T-cell (primary cell): ENCODE measurements at regions of chr19 and their contacts with region 1.

Region 1: GRCh38 chr19:57872450-57872849 is 16.4 kb downstream of the ZNF814 start:
- DNase-seq: no peak
- ATAC-seq: no peak
- H3K4me3 ChIP-seq: no peak overlapping the region
- H3K4me3 Mint-ChIP-seq: no peak overlapping the region
- H3K27ac ChIP-seq: no peak overlapping the region
- H3K27ac Mint-ChIP-seq: no peak overlapping the region
- H3K4me1 ChIP-seq: no peaks in the 10 kb centered on the region
- H3K4me1 Mint-ChIP-seq: no peaks in the 10 kb centered on the region
- H3K27me3 ChIP-seq: no peaks in the 10 kb centered on the region
- H3K27me3 Mint-ChIP-seq: no peaks in the 10 kb centered on the region

Region 2: DNA sequence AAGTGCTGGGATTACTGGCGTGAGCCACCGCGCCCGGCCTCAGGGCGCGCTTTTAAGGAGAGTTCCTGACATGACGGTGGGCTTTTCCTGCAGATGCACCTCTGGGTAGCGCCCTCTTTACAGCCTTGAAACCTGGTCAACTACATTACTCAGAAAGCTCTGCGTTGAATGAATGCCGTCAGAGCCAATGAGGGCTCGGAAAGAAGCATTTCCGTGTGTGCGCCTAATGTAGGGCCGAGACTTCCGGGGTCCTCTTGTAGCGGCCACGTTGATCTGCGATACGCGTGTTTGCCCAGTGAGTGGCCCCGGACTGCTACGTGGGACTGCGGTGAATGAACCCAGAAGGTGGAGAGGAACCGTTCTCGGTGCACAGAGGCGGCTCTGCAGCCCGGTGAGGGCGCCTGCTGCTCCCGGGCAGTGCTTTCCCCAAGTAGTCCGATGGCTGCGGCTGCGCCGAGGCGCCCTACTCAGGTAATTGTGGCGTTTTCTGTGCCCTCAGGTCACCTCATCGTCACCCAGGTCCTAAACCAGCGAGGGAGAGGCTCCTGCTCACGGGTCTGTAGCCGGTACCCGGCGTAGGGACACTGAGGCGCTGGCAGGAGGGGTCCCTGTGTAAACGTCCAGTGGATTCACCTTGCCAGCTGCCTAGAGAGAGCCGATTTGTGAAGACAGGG is 52.8 kb before region 1 on chr19:
- CTCF ChIA-PET with region 1: no interaction called
- POLR2A ChIA-PET with region 1: interaction called in 1 of 2 experiments, 13 read pairs
- DNase-seq: peak; percentile 47 to 92 (median 79)
- ATAC-seq: peak; percentile 84 to 88 (median 87)
- H3K4me3 ChIP-seq: peak overlapping the region; percentile 67 to 100
- H3K4me3 Mint-ChIP-seq: peak overlapping the region; percentile 96 to 98 (median 97)
- H3K27ac ChIP-seq: peak overlapping the region; percentile 78
- H3K27ac Mint-ChIP-seq: peak overlapping the region; percentile 96 to 97
- H3K4me1 ChIP-seq: peaks cover 7 to 33% of the 10 kb centered on the region in 2 experiments
- H3K4me1 Mint-ChIP-seq: peaks cover 63 to 69% (median 68%) of the 10 kb centered on the region in 3 donors
- H3K27me3 ChIP-seq: no peaks in the 10 kb centered on the region
- H3K27me3 Mint-ChIP-seq: no peaks in the 10 kb centered on the region